IMR-90 (cell line): ENCODE measurements at regions of chr14 and their contacts with region 1.

Region 1: DNA sequence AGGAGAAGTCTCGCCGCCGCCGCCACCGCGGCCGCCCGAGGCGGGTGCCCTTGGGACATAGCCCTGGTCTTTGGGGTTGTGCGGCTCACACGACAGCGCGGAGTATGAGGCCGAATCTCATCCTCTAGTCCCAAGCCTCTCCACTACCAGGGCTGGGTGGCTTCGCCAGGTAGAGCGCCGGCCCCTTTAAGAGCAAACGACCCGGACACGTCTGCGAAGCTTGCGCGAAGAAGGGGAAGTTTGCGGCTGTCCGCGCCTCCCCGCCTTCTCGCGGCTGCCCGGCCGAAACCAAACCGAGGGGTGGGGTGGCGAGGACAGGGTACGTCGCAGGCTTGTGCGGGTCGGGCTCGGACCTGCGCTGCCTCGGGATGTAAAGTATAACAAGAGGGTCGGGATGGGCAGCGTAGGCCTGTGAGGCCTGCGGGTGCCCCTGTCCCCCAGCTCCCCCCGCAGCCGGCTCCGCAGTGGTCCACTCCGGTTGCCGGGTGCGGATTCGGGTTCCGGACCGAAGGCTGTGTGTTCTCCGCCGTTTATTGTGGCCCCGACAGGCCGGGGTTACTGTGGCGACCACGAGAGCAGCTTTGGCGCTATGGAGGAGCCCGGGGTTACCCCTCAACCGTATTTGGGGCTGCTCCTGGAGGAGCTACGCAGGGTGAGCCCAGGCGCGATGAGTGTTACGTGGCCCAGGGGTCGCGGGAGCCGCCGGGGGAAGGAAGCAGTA is 33.3 kb downstream of the MIA2 start:
- DNase-seq: peak; percentile 81
- ATAC-seq: peak; percentile 95
- H3K4me3 ChIP-seq: peak overlapping the region; percentile 70
- H3K27ac ChIP-seq: peak overlapping the region; percentile 95
- H3K4me1 ChIP-seq: peaks cover 2% of the 10 kb centered on the region; the same call in 1 of the 2 replicates
- H3K27me3 ChIP-seq: no peaks in the 10 kb centered on the region
- CTCF ChIP-seq: no peak
- POLR2A ChIP-seq: peak; percentile 68
- RAD21 ChIP-seq: no peak; the same call in 1 of the 2 replicates

Region 2: GRCh38 chr14:39432179-39432618 is 165.2 kb after region 1 on chr14 and contains the start of gene FBXO33:
- CTCF ChIA-PET with region 1: no interaction called
- POLR2A ChIA-PET with region 1: no interaction called
- dilution Hi-C with region 1: no loop called
- in situ Hi-C with region 1: no loop called
- intact Hi-C with region 1: loop called (anchors 5 kb)
- DNase-seq: peak; percentile 96
- ATAC-seq: peak; percentile 90
- H3K4me3 ChIP-seq: peak within 1 kb of the TSS; percentile 86
- H3K27ac ChIP-seq: peak within 1 kb of the TSS; percentile 97
- H3K4me1 ChIP-seq: 0 out of 2 replicates have a peak, but pooled peaks cover 2% of the 10 kb centered on the region
- H3K27me3 ChIP-seq: no peaks in the 10 kb centered on the region
- CTCF ChIP-seq: no peak
- POLR2A ChIP-seq: no peak
- RAD21 ChIP-seq: no peak
- total RNA-seq, gene FBXO33: 10.0 and 16.1 TPM in 2 replicates

Region 3: DNA sequence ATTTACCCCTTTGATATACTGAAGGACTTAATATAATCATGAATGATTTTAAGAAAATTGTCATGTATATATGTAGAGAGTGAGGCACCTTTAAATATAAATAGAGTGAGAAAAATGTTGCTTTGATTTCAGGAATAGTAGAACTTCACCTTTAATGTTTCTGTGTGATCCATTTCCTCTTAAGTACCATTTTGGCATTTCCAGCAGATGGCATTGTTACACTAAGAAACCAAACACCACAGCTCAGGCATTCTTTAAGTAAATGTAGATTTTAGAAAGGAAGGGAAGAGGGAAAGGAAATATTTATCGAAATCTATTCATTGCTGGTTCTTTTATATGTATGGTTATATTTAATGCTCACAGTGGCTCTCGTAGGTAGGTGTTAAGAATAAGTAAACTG is 721.9 kb after region 1 on chr14:
- CTCF ChIA-PET with region 1: no interaction called
- POLR2A ChIA-PET with region 1: no interaction called
- dilution Hi-C with region 1: no loop called
- in situ Hi-C with region 1: no loop called
- intact Hi-C with region 1: no loop called
- DNase-seq: no peak
- ATAC-seq: no peak
- H3K4me3 ChIP-seq: no peak overlapping the region
- H3K27ac ChIP-seq: no peak overlapping the region
- H3K4me1 ChIP-seq: no peaks in the 10 kb centered on the region
- H3K27me3 ChIP-seq: no peaks in the 10 kb centered on the region
- CTCF ChIP-seq: 0 out of 2 replicates have a peak, but pooled peaks have one; percentile 8
- POLR2A ChIP-seq: no peak
- RAD21 ChIP-seq: 0 out of 2 replicates have a peak, but pooled peaks have one; percentile 11